Right lobe of liver (tissue), 6 donors: ENCODE measurements at regions of chr11 and their contacts with region 1.

Region 1: GRCh38 chr11:34366522-34366921 is 8.7 kb upstream of the ABTB2 start:
- DNase-seq: no peak
- ATAC-seq: peak in 3 of 4 donors; percentile 16 to 38 (median 32)
- H3K4me3 ChIP-seq: no peak overlapping the region
- H3K27ac ChIP-seq: no peak overlapping the region
- H3K4me1 ChIP-seq: peaks cover 0 to 24% (median 0%) of the 10 kb centered on the region in 4 donors
- H3K27me3 ChIP-seq: no peaks in the 10 kb centered on the region
- CTCF ChIP-seq: peak; percentile 54 to 73 (median 56)
- POLR2A ChIP-seq: no peak

Region 2: DNA sequence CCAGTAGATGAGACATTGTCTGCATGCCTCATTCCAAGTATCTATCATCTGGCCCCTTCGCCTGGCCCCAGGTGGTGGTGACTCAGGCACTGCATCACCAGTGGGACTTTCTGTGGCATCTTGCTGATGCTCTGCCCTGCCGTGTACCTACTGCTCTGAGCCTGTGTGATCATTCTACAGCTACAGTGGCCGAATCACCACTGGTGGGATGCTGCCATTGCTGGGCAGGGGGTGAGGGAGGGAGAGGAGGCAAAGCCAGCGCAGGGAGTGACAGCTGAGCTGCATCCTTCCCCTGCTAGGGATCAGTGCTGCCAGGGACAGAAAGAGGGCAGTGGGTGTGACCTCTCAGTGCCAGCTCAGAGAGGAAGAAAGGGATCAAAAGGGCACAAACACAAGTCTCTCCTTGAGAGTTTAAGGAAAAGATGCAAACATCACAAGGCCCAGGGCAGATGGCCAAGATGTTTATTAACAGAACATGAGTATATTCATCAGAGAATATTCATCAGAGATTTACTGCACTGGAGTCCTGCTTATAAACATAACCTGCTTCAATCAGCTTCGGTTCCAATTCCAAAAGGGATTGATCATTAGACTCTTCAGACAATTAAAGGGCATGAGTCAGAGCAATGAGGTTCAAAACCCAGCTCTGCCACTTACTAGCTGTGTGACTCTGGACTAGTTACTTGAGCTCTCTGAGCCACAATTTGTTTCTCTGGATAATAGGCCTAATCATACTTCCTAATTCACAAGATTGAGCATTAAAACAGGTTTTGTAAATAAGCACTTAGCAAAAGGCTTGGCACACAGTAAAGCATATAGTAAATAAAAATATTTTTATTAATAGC is 151.3 kb before region 1 on chr11:
- intact Hi-C with region 1: no loop called
- DNase-seq: peak in 1 of 3 donors; percentile 42
- ATAC-seq: peak in 1 of 4 donors; percentile 43
- H3K4me3 ChIP-seq: no peak overlapping the region
- H3K27ac ChIP-seq: peak overlapping the region in 2 of 3 donors; percentile 33 to 62
- H3K4me1 ChIP-seq: peaks cover 0 to 38% (median 4%) of the 10 kb centered on the region in 4 donors
- H3K27me3 ChIP-seq: no peaks in the 10 kb centered on the region
- CTCF ChIP-seq: no peak
- POLR2A ChIP-seq: no peak

Region 3: GRCh38 chr11:34480314-34480713 is 113.8 kb after region 1 on chr11:
- intact Hi-C with region 1: loop called in 1 of 2 experiments (anchors 10 kb)
- DNase-seq: no peak
- ATAC-seq: peak; percentile 54 to 70 (median 58)
- H3K4me3 ChIP-seq: no peak overlapping the region
- H3K27ac ChIP-seq: no peak overlapping the region
- H3K4me1 ChIP-seq: peaks cover 0 to 15% (median 0%) of the 10 kb centered on the region in 4 donors
- H3K27me3 ChIP-seq: no peaks in the 10 kb centered on the region
- CTCF ChIP-seq: no peak
- POLR2A ChIP-seq: no peak

Region 4: GRCh38 chr11:34492806-34493414 is 126.4 kb after region 1 on chr11:
- intact Hi-C with region 1: loop called (anchors 10 kb)
- DNase-seq: peak in 2 of 3 donors; percentile 43 to 65
- ATAC-seq: peak; percentile 50 to 76 (median 71)
- H3K4me3 ChIP-seq: no peak overlapping the region
- H3K27ac ChIP-seq: no peak overlapping the region
- H3K4me1 ChIP-seq: peaks cover 0 to 18% (median 3%) of the 10 kb centered on the region in 4 donors
- H3K27me3 ChIP-seq: no peaks in the 10 kb centered on the region
- CTCF ChIP-seq: peak; percentile 74 to 81 (median 76)
- POLR2A ChIP-seq: no peak